HCT116 (cell line): ENCODE measurements at regions of chr17 and their contacts with region 1.

Region 1: GRCh38 chr17:57861000-57861789 is 11.4 kb upstream of the MRPS23 start:
- DNase-seq: peak; percentile 75
- ATAC-seq: peak; percentile 68
- H3K4me3 ChIP-seq: peak overlapping the region; percentile 38 to 51
- H3K27ac ChIP-seq: peak overlapping the region; percentile 79
- H3K4me1 ChIP-seq: peaks cover 54 to 80% of the 10 kb centered on the region in 2 experiments
- H3K27me3 ChIP-seq: no peaks in the 10 kb centered on the region
- CTCF ChIP-seq: 0 out of 6 replicates have a peak, but pooled peaks of 1 of the 3 experiments have one; percentile 5
- POLR2A ChIP-seq: no peak
- RAD21 ChIP-seq: no peak

Region 2: DNA sequence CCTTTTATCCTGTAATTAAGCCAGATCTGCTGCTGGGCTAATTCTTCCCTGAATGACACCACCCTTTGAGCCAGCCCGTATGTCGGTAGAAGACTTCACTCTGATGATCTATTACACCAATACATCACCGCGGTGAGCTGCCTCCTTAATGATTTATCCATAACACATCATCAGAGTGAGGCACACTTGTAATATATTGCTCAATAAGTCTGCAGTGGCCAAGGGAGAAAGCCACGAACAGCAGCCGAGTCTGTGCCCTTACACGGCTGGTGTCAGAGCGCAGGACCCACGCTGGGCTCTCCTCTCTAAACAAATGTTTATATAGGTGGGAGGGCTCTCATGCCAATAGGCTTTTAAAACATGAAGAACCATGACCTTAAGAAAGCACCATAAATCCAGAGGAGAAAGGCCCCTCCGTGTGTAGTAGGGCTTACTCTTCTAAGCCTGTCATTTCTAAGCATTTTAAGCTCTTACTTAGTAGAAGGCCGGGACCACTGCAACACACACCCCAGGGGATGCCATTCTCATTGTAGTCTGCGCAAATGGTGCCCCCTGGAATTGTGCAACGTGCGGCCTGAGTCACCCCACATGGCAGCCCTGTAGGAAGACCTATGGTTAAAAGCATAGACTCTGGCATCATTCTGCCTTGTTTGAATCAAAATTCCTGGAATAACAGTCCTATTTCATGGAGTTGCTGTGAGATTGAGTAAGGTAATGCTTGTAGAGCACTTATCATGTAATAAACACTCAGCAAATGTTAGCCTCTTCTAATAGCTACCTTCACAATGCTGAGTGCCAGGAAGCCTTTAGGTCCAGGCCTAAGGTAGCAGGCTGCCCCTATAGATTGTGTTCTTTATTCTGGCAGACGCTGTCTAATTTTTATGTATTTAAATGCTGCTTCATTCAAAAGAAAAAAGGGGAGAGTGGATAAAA is 37.5 kb before region 1 on chr17:
- CTCF ChIA-PET with region 1: no interaction called
- POLR2A ChIA-PET with region 1: no interaction called
- RAD21 ChIA-PET with region 1: no interaction called
- intact Hi-C with region 1: no loop called
- DNase-seq: no peak
- ATAC-seq: no peak
- H3K4me3 ChIP-seq: no peak overlapping the region
- H3K27ac ChIP-seq: no peak overlapping the region
- H3K4me1 ChIP-seq: no peaks in the 10 kb centered on the region
- H3K27me3 ChIP-seq: no peaks in the 10 kb centered on the region
- CTCF ChIP-seq: no peak
- POLR2A ChIP-seq: no peak
- RAD21 ChIP-seq: no peak

Region 3: DNA sequence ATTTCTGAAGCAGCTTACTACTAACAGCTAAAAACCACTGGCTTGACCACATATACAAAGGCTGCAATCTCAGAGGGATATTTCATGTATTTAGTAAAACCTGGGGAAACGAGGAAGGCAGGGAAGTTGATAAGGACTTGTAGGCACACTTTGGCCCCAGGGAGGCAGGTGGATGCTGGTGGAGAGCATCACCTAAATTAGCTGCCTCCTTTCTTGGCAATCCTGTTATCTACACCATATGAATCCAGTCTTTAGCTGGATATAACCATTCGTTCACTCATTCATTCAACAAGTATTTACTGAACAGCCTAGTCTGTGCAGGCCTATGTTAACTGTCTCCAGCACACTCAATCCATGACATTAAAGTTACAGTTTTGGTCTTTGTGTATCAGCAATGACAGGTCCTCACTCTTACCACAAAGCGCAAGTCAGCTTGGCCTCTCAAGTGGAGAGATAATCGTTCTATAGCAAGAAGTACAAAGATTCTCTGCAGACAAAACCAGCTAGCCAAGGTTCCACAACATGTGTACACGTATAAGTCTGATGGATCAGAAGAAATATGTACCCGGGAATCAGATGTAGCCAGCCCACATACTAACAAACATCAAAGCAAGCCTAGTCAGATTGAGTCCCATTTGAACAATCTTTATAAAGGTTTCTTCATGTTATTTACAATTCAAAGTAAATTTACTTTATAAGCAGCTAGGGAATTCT is 22.2 kb before region 1 on chr17:
- CTCF ChIA-PET with region 1: no interaction called
- POLR2A ChIA-PET with region 1: no interaction called
- RAD21 ChIA-PET with region 1: no interaction called
- intact Hi-C with region 1: no loop called
- DNase-seq: no peak
- ATAC-seq: no peak
- H3K4me3 ChIP-seq: no peak overlapping the region
- H3K27ac ChIP-seq: no peak overlapping the region
- H3K4me1 ChIP-seq: 0 out of 4 replicates have a peak, but pooled peaks cover 0 to 5% of the 10 kb centered on the region in 2 experiments
- H3K27me3 ChIP-seq: no peaks in the 10 kb centered on the region
- CTCF ChIP-seq: no peak
- POLR2A ChIP-seq: no peak
- RAD21 ChIP-seq: no peak

Region 4: DNA sequence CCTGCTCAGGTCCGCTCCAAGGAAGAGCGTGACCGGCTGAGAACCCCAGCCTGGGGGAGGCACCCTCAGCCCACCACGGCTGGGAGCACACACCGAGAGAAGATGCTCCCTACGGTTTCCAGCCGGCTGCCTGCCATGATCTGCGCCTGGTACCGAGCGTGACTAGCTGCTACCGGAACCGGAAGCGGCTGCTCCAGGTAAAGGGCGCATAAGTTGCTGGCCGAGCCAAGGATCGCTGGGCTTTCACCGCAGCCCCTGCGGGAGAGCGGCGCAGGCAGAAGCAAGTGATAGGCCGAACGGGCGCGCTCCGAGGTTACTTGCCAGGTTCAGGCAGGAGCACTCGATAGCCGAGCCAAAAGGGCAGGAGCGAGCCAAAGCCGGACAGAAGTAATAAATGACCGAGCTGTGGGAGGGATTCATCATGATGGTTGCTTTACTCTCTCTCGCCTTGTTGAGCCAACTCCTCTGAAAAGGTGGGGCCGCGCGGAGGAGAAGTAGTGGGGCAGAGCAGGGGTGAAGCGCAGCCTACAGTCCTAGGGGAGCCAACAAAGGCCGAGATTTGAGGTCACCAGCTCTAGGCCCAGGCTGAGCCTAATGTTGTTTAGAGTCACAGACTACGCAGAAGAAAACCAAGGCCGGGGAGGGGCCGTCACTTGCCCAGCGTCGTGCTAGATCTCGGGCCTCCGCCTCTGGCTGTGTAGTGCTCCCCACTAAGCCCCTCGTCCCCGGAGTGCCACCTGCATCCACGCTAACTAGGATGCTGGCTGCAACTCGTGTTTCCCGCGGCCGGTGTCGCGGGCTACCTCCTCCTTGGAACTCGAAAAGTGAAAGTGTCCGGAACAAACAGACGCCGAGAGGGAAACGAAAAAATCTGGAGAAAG is 11.1 kb before region 1 on chr17 and contains the start of gene MRPS23:
- CTCF ChIA-PET with region 1: interaction called, 22 read pairs
- POLR2A ChIA-PET with region 1: interaction called, 25 read pairs
- RAD21 ChIA-PET with region 1: interaction called, 3 to 5 read pairs
- intact Hi-C with region 1: no loop called
- DNase-seq: peak; percentile 98
- ATAC-seq: peak; percentile 92
- H3K4me3 ChIP-seq: peak within 1 kb of the TSS; percentile 88 to 94
- H3K27ac ChIP-seq: peak within 1 kb of the TSS; percentile 71
- H3K4me1 ChIP-seq: peaks cover 12 to 34% of the 10 kb centered on the region in 2 experiments
- H3K27me3 ChIP-seq: no peaks in the 10 kb centered on the region
- CTCF ChIP-seq: no peak
- POLR2A ChIP-seq: peak; percentile 11
- RAD21 ChIP-seq: no peak
- total RNA-seq, gene MRPS23: 109 TPM

Region 5: GRCh38 chr17:57875309-57876115 is 14.3 kb after region 1 on chr17:
- CTCF ChIA-PET with region 1: interaction called, 36 read pairs
- POLR2A ChIA-PET with region 1: interaction called, 25 read pairs
- RAD21 ChIA-PET with region 1: interaction called, 6 to 10 read pairs
- intact Hi-C with region 1: no loop called
- DNase-seq: peak; percentile 90
- ATAC-seq: peak; percentile 81
- H3K4me3 ChIP-seq: peak overlapping the region; percentile 17 to 45
- H3K27ac ChIP-seq: peak overlapping the region; percentile 68
- H3K4me1 ChIP-seq: peaks cover 71 to 98% of the 10 kb centered on the region in 2 experiments
- H3K27me3 ChIP-seq: no peaks in the 10 kb centered on the region
- CTCF ChIP-seq: peak in 2 of 3 experiments; percentile 55 to 60; a peak in 4 of 6 replicates
- POLR2A ChIP-seq: no peak
- RAD21 ChIP-seq: no peak

Region 6: GRCh38 chr17:57946798-57947358 is 85.7 kb after region 1 on chr17:
- CTCF ChIA-PET with region 1: interaction called, 5 read pairs
- POLR2A ChIA-PET with region 1: no interaction called
- RAD21 ChIA-PET with region 1: interaction called, 12 to 18 read pairs
- intact Hi-C with region 1: loop called (anchors 2 kb)
- DNase-seq: no peak
- ATAC-seq: no peak
- H3K4me3 ChIP-seq: peak overlapping the region; percentile 21 to 48
- H3K27ac ChIP-seq: peak overlapping the region; percentile 97
- H3K4me1 ChIP-seq: peaks cover 90 to 98% of the 10 kb centered on the region in 2 experiments
- H3K27me3 ChIP-seq: no peaks in the 10 kb centered on the region
- CTCF ChIP-seq: no peak
- POLR2A ChIP-seq: no peak
- RAD21 ChIP-seq: no peak